Psoas muscle (tissue), 8 donors: ENCODE measurements at regions of chr11 and their contacts with region 1.

Region 1: GRCh38 chr11:45289369-45289768 is 3.2 kb upstream of the SYT13 start:
- DNase-seq: no peak
- ATAC-seq: no peak
- H3K4me3 ChIP-seq: no peak overlapping the region
- H3K27ac ChIP-seq: no peak overlapping the region
- H3K4me1 ChIP-seq: no peaks in the 10 kb centered on the region
- H3K27me3 ChIP-seq: peaks cover 0 to 76% (median 16%) of the 10 kb centered on the region in 3 donors
- CTCF ChIP-seq: no peak

Region 2: DNA sequence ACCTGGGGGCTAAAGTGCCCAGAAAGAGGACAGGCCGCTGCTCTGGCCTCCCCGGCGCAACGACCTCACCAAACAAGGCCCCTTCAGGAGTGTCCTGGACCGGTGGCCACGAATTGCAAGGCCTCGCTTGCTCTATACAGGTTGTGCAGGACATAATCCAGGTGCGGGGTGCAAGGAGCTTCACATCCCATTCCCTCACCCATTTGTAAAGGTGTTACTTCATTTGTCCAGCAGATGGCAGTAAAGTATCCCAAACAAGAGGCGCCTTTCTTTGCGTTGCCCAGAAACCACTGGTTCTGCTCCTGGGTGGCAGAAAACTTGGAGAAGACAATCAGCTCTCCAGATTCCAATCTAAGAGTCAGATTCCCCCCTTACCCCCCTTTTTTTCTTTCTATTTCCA is 178.8 kb before region 1 on chr11:
- intact Hi-C with region 1: loop called (anchors 1 to 2 kb)
- DNase-seq: peak in 1 of 2 donors; percentile 45
- ATAC-seq: peak; percentile 80 to 87 (median 84)
- H3K4me3 ChIP-seq: no peak overlapping the region
- H3K27ac ChIP-seq: no peak overlapping the region
- H3K4me1 ChIP-seq: no peaks in the 10 kb centered on the region
- H3K27me3 ChIP-seq: peaks cover 0 to 7% (median 0%) of the 10 kb centered on the region in 3 donors
- CTCF ChIP-seq: peak; percentile 86

Region 3: GRCh38 chr11:45305874-45306623 is 16.7 kb after region 1 on chr11:
- intact Hi-C with region 1: no loop called
- DNase-seq: no peak
- ATAC-seq: no peak
- H3K4me3 ChIP-seq: no peak overlapping the region
- H3K27ac ChIP-seq: no peak overlapping the region
- H3K4me1 ChIP-seq: no peaks in the 10 kb centered on the region
- H3K27me3 ChIP-seq: peaks cover 0 to 4% (median 0%) of the 10 kb centered on the region in 3 donors
- CTCF ChIP-seq: no peak

Region 4: GRCh38 chr11:45371251-45372115 is 82.1 kb after region 1 on chr11:
- intact Hi-C with region 1: no loop called
- DNase-seq: peak; percentile 45 to 68
- ATAC-seq: peak; percentile 59 to 74 (median 62)
- H3K4me3 ChIP-seq: no peak overlapping the region
- H3K27ac ChIP-seq: no peak overlapping the region
- H3K4me1 ChIP-seq: no peaks in the 10 kb centered on the region
- H3K27me3 ChIP-seq: peaks cover 0 to 16% (median 0%) of the 10 kb centered on the region in 3 donors
- CTCF ChIP-seq: peak; percentile 79